Ovary (tissue), 10 donors: ENCODE measurements at regions of chr9 and their contacts with region 1.

Region 1: GRCh38 chr9:124485201-124485600 is 22.0 kb downstream of the NR5A1 start:
- DNase-seq: no peak
- H3K4me3 ChIP-seq: no peak overlapping the region
- H3K27ac ChIP-seq: no peak overlapping the region
- H3K4me1 ChIP-seq: no peaks in the 10 kb centered on the region
- H3K27me3 ChIP-seq: no peaks in the 10 kb centered on the region
- CTCF ChIP-seq: no peak
- EP300 ChIP-seq: no peak
- POLR2A ChIP-seq: no peak

Region 2: DNA sequence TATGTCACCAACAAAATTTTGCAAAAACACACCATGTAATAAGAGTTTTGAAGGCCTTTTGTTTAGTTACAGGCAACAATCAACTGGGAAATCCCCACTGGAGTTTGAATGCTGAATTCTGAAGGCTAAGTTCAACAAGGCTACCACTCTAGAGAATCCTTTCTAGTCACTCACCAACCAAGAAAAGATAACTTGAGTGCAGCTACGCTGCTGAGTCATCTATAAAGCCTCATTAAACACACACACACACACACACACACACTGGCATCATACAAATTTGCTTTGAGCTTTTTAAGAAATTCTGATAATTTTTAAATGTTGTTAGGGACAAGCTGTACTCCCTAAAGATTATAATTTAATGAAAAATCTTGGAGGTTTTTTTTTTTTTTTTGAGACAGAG is 774.9 kb before region 1 on chr9:
- intact Hi-C with region 1: no loop called
- DNase-seq: no peak
- H3K4me3 ChIP-seq: no peak overlapping the region
- H3K27ac ChIP-seq: no peak overlapping the region
- H3K4me1 ChIP-seq: no peaks in the 10 kb centered on the region
- H3K27me3 ChIP-seq: no peaks in the 10 kb centered on the region
- CTCF ChIP-seq: no peak
- EP300 ChIP-seq: no peak
- POLR2A ChIP-seq: no peak

Region 3: GRCh38 chr9:124442826-124443225 is 42.4 kb before region 1 on chr9:
- intact Hi-C with region 1: loop called in 1 of 4 experiments (anchors 1 kb)
- DNase-seq: no peak
- H3K4me3 ChIP-seq: no peak overlapping the region
- H3K27ac ChIP-seq: no peak overlapping the region
- H3K4me1 ChIP-seq: no peaks in the 10 kb centered on the region
- H3K27me3 ChIP-seq: no peaks in the 10 kb centered on the region
- CTCF ChIP-seq: no peak
- EP300 ChIP-seq: no peak
- POLR2A ChIP-seq: no peak